GM10248 (cell line): ENCODE measurements at regions of chr1 and their contacts with region 1.

Region 1: GRCh38 chr1:150629115-150629928 is at the start of gene ENSA:
- DNase-seq: peak; percentile 94
- CTCF ChIP-seq: no peak

Region 2: GRCh38 chr1:150449451-150449850 is 179.9 kb before region 1 on chr1:
- CTCF ChIA-PET with region 1: no interaction called
- POLR2A ChIA-PET with region 1: no interaction called
- DNase-seq: no peak
- CTCF ChIP-seq: no peak

Region 3: DNA sequence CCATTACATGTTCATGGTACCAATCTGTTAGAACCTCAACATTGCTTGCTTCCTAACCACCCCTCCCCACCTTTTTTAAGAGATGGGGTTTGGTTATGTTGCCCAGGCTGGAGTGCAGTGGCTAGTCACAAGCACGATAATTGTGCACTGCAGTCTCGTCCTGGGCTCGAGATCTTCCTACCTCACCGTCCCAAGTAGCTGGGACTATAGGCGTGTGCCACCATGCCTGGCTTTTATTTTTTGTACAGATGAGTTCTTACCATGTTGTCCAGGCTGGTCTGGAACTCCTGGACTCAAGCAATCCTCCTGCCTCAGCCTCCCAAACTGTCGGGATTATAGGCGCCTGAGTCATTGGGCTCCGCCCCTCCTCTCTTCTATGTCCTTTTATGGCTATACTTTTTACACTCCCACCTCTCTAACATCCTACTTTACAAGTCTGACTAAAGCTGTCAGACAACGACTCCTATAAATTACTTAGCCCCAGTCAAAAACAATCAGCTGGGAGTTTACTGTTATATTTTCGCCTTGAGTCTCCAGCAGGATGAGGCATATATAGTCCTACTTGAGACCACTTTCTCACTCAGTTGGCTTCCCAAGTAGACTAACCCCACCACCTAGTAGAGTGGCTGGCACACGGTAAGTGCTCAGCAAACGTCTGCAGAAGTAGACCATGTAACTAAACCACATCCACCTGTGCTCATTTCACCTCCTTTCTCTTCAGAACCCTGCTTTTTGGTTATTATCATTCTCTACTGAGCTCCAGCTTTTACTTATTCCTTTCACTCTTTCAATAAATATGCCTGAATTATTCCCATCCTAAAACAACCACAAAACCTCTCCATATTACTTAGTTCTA is 13.7 kb before region 1 on chr1:
- CTCF ChIA-PET with region 1: interaction called, 10 read pairs
- POLR2A ChIA-PET with region 1: interaction called, 9 read pairs
- DNase-seq: no peak
- CTCF ChIP-seq: no peak

Region 4: GRCh38 chr1:150661156-150661555 is 31.8 kb after region 1 on chr1:
- CTCF ChIA-PET with region 1: no interaction called
- POLR2A ChIA-PET with region 1: no interaction called
- DNase-seq: no peak
- CTCF ChIP-seq: no peak

Region 5: GRCh38 chr1:150960646-150961045 is 331.3 kb after region 1 on chr1:
- CTCF ChIA-PET with region 1: no interaction called
- POLR2A ChIA-PET with region 1: interaction called, 12 read pairs
- DNase-seq: no peak
- CTCF ChIP-seq: no peak